Astrocyte of the cerebellum (primary cell): ENCODE measurements at regions of chr17 and their contacts with region 1.

Region 1: GRCh38 chr17:16516594-16517051 is 24.6 kb upstream of the LRRC75A start:
- DNase-seq: peak; percentile 43
- H3K4me3 ChIP-seq: peak overlapping the region; percentile 16
- CTCF ChIP-seq: no peak

Region 2: GRCh38 chr17:16428098-16428882 is 88.3 kb before region 1 on chr17:
- in situ Hi-C with region 1: no loop called
- DNase-seq: no peak
- H3K4me3 ChIP-seq: no peak overlapping the region
- CTCF ChIP-seq: peak; percentile 61

Region 3: GRCh38 chr17:16453493-16453851 is 63.2 kb before region 1 on chr17:
- in situ Hi-C with region 1: loop called (anchors 5 kb)
- DNase-seq: no peak
- H3K4me3 ChIP-seq: no peak overlapping the region
- CTCF ChIP-seq: no peak